GM18951 (cell line): ENCODE measurements at regions of chr5 and their contacts with region 1.

Region 1: DNA sequence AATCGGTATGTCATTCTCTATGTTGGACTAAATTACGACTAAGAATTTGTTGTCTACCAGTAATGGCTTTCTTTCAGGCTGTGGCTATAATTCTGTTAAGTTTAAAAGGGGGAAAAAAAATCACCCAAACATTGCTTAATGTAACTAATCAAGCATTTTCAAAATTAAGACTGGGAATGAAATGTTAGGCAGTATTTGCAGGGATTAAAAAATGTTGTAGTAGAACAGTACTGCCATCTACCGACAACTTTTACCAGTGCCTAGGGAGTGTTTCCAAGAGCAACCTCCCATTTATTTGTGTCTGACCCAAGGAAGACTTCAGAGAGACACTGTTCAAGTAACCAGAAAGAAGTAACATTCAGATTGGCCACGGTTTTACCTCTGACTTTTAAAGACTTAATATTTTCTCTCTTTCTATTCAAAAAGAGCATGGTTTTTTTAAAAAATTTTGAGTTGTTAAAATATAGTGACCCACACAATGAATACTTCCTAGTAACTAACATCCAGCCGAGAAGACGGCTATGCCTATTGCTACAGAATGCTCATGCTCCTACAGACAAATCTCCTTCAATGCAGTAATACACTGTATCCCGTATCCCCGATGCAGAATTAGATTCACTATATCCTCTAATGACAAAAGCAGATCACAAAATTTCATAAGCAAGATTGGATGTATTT is 92.4 kb downstream of the ARL15 start:
- POLR2A ChIP-seq: no peak

Region 2: DNA sequence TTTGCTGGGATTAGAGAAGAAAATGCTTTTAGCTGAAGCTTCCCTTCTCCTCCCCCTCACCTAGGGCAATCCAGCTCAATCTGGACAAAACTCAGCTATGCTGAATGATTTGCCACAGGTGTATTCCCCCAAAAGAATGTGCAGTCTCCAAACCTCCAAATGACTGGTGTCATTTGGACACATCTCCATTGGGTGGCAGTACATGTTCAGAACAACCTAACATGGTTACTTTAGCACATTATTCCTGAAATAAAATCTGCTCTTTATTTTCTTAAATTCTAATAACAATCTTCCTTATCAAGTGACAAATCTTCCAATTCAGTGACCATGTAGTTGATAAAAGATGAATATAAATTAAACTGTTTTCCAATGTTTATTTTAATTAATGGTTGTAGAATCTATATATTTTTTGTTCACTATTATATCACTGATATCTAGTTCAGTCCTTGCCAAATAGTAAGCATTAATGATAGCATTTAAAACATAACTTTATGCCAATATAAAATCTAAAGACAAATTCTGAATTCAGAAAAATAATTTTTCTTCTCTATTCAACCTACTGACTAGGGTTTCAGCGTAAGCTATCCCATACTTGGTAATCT is 1047.1 kb before region 1 on chr5:
- in situ Hi-C with region 1: loop called (anchors 25 kb)
- POLR2A ChIP-seq: no peak

Region 3: GRCh38 chr5:54013556-54014194 is 204.3 kb before region 1 on chr5:
- in situ Hi-C with region 1: no loop called
- POLR2A ChIP-seq: no peak